Activated T-helper 2 cell treated with anti-CD3 and anti-CD28 coated beads, Interferon-gamma antibody, Interleukin-2, Interleukin-4, amounts not matched to agents 10 μg/mL and 5 μg/mL and 100 μg/mL, durations not matched to agents 14 hours and 24 hours and 36 hours (primary cell): ENCODE measurements at regions of chr17 and their contacts with region 1.

Region 1: DNA sequence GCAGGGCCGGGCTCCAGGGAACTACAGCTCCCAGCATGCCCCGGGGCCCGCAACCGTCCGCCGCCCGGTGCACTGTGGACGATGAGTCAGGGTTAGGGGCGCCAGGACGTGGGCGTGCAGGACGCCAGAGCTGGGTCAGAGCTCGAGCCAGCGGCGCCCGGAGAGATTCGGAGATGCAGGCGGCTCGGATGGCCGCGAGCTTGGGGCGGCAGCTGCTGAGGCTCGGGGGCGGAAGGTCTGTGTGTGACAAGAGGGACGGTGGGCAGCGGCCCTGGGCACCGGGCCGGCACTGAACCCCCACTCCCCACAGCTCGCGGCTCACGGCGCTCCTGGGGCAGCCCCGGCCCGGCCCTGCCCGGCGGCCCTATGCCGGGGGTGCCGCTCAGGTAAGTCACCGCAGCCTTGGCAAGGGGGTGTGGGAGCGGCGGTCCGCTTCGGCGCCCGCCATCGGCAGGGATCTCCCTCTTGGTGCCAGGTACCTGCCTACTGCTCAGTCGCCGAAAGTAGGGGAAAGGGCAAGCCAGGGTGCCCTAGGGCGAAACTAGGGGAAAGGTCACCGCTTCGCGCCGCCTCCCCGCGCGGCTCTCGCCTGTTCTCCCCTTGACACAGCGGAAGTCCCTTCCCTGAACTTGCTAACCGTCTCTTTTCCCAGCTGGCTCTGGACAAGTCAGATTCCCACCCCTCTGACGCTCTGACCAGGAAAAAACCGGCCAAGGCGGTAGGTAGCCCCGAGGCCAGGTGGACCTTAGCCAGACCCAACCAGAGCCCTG is at the starts of genes ACADVL and DLG4:
- DNase-seq: peak; percentile 67
- H3K4me3 Mint-ChIP-seq: peak within 1 kb of the TSS; percentile 99
- H3K27ac Mint-ChIP-seq: peak within 1 kb of the TSS; percentile 98
- H3K4me1 Mint-ChIP-seq: peaks cover 48% of the 10 kb centered on the region
- H3K27me3 Mint-ChIP-seq: no peaks in the 10 kb centered on the region
- total RNA-seq, gene ACADVL: 492 and 503 TPM in 2 replicates
- total RNA-seq, gene DLG4: 10.5 and 10.6 TPM in 2 replicates

Region 2: GRCh38 chr17:7095625-7096024 is 124.4 kb before region 1 on chr17:
- intact Hi-C with region 1: no loop called
- DNase-seq: no peak
- H3K4me3 Mint-ChIP-seq: no peak overlapping the region
- H3K27ac Mint-ChIP-seq: no peak overlapping the region
- H3K4me1 Mint-ChIP-seq: no peaks in the 10 kb centered on the region
- H3K27me3 Mint-ChIP-seq: peaks cover 19% of the 10 kb centered on the region

Region 3: DNA sequence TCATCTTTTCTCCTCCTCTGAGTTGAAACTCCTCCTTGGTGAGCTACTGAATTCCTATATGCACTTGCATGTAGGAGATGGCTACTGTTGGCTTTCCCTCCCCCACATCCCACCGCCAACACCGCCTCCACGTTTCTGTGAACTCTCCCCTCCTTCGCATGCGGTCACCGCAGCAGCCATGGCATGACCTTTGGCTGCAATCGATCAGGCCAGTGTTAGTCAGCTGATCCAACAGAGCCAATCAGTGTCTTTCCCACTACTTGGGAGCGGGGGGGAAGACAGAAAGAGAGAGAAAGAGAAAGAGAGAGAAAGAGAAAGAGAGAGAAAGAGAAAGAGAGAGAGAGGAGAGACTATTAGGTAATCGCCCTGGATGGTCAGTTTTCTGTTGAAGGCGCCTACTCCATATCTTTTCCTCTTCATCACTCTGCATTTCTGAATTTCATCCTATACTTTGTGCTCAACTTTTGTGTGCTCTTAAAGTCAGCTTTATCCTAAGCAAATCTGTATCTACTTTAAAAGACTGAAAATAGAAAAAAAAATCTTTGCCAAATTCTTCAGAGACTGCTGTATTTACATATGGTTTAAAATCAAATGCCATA is 63.6 kb before region 1 on chr17:
- intact Hi-C with region 1: no loop called
- DNase-seq: no peak
- H3K4me3 Mint-ChIP-seq: no peak overlapping the region
- H3K27ac Mint-ChIP-seq: no peak overlapping the region
- H3K4me1 Mint-ChIP-seq: no peaks in the 10 kb centered on the region
- H3K27me3 Mint-ChIP-seq: peaks cover 27% of the 10 kb centered on the region

Region 4: DNA sequence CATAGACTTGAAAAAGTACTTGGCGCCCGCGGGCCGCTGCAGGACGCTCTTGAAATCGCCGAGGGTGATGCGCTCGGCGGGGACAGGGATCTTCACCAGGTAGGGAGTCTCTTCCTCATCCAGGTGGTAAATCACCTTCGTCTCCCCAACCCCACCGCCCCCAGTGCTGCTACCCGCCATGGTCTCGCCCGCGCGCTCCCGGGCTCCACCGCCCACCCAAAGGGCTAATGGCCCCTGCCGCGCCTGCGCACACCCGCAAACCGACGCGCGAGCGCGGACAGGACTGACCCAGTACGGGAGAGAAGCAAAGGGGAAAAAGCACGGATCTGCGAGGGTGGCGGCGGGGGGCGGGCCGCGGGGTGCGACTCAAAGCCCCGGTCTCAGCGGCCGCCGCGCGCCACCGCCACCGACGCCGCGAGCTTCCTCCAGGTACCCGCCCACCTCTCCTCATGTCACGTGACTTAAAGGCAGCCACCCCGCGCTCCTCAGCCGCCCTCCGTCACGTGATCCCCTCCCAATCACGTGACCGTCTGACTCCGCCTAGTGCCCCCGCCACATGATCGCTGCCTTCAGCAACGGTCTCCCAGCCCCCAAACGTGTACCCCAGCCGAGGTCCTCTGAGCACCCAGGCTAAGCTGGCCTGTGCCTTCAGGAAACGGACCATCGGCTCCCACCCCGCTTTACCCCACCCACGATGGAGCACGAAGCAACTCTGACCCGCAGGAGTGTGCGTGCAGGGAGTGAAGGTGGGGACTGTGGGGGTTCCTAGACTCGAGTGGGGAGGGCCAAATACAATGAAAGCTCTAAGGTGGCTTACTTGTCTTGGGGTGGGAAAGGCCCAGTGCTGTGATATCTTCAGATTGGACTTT is 14.3 kb after region 1 on chr17 and contains the start of gene DVL2:
- intact Hi-C with region 1: loop called (anchors 1 kb)
- DNase-seq: peak; percentile 93
- H3K4me3 Mint-ChIP-seq: peak within 1 kb of the TSS; percentile 98
- H3K27ac Mint-ChIP-seq: peak within 1 kb of the TSS; percentile 87
- H3K4me1 Mint-ChIP-seq: peaks cover 38% of the 10 kb centered on the region
- H3K27me3 Mint-ChIP-seq: no peaks in the 10 kb centered on the region
- total RNA-seq, gene DVL2: 69.7 and 73.1 TPM in 2 replicates